Heart left ventricle (tissue), 16 donors: ENCODE measurements at regions of chrX and their contacts with region 1.

Region 1: GRCh38 chrX:106510713-106511403 is 100.9 kb upstream of the RADX start:
- DNase-seq: no peak
- ATAC-seq: no peak
- H3K4me3 ChIP-seq: no peak overlapping the region
- H3K27ac ChIP-seq: no peak overlapping the region
- H3K4me1 ChIP-seq: no peaks in the 10 kb centered on the region
- H3K27me3 ChIP-seq: peaks cover 0 to 21% (median 0%) of the 10 kb centered on the region in 9 donors
- CTCF ChIP-seq: no peak
- POLR2A ChIP-seq: no peak

Region 2: DNA sequence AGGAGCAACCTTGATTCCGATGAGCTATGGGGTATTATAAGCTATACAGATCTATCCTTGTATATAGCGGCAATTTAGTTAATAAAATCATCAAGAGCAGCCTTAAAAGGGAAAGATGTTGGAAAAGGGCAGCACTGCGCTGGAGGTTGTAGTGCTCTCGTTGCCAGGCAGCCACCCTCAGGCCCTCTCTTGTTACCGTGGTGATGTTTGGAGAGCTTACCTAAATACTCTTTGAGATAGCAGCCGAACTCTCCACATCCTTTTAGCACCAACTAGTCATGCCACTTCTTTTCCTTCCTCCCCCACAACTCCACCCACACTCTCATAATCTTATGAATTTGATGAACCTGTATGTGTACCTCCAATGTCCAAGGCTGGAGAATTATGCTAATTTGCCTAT is 97.2 kb after region 1 on chrX:
- intact Hi-C with region 1: no loop called
- DNase-seq: no peak
- ATAC-seq: no peak
- H3K4me3 ChIP-seq: no peak overlapping the region
- H3K27ac ChIP-seq: no peak overlapping the region
- H3K4me1 ChIP-seq: no peaks in the 10 kb centered on the region
- H3K27me3 ChIP-seq: peaks cover 0 to 5% (median 0%) of the 10 kb centered on the region in 9 donors
- CTCF ChIP-seq: no peak
- POLR2A ChIP-seq: no peak

Region 3: DNA sequence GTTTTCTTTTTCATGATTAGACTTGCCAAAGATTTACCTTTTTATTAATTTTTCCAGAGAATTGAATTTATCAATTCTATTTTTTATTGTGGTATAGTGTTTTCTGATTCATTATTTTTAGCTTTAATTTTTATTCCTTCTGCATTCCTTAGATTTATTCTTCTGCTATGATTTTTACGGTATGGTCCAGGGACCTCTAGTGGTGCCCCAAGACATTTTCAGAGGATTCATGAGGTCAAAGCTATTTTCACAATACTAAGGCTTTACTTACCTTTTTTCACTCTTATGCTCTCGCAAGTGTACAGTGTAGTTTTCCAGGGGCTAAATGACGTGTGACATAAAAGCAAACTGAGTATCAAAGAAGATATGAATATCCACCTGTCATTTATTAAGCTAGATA is 108.9 kb after region 1 on chrX:
- intact Hi-C with region 1: loop called in 1 of 10 experiments (anchors 10 kb)
- DNase-seq: no peak
- ATAC-seq: no peak
- H3K4me3 ChIP-seq: no peak overlapping the region
- H3K27ac ChIP-seq: no peak overlapping the region
- H3K4me1 ChIP-seq: no peaks in the 10 kb centered on the region
- H3K27me3 ChIP-seq: peaks cover 0 to 17% (median 0%) of the 10 kb centered on the region in 9 donors
- CTCF ChIP-seq: peak in 6 of 12 donors; percentile 5 to 31 (median 14)
- POLR2A ChIP-seq: no peak